Activated B cell treated with CpG ODN at 0.5 μM for 24 hours (primary cell): ENCODE measurements at regions of chr1 and their contacts with region 1.

Region 1: DNA sequence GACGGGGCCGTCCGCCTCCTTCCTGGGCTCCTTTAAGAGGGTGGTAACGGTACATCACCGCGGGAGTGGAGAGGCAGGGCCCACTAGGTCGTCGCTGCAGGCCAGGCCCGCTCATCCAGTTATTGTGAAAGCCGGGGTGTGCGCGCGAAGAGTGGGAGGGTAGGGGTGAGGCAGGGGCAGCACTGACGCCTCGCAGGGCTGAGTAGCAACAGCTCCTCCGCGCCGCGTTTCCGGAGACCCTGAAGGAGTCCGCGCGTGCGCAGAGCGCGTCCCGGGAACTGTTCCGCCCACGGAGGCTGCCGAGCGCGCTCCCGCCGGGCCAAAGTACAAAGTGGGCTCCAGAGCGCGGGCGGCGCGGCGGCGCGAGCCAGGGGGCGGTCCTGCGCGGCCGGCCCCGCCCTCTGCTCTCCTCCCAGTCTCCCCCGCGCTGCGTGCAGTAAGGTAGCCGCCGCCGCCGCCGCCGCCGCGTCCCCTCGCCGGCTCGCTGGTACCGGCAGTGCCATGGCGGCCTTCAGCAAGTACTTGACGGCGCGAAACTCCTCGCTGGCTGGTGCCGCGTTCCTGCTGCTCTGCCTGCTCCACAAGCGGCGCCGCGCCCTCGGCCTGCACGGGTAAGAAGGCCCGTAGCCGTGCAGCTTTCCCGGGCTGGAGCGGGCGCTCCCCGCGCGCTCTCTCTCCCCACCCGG is at the start of gene ABCD3:
- DNase-seq: peak; percentile 97
- ATAC-seq: peak; percentile 95
- H3K4me3 Mint-ChIP-seq: no peak within 1 kb of the TSS
- H3K27ac Mint-ChIP-seq: no peak within 1 kb of the TSS
- H3K4me1 Mint-ChIP-seq: peaks cover 17% of the 10 kb centered on the region
- H3K27me3 Mint-ChIP-seq: no peaks in the 10 kb centered on the region
- CTCF ChIP-seq: no peak
- total RNA-seq, gene ABCD3: 20.8 and 23.2 TPM in 2 replicates

Region 2: DNA sequence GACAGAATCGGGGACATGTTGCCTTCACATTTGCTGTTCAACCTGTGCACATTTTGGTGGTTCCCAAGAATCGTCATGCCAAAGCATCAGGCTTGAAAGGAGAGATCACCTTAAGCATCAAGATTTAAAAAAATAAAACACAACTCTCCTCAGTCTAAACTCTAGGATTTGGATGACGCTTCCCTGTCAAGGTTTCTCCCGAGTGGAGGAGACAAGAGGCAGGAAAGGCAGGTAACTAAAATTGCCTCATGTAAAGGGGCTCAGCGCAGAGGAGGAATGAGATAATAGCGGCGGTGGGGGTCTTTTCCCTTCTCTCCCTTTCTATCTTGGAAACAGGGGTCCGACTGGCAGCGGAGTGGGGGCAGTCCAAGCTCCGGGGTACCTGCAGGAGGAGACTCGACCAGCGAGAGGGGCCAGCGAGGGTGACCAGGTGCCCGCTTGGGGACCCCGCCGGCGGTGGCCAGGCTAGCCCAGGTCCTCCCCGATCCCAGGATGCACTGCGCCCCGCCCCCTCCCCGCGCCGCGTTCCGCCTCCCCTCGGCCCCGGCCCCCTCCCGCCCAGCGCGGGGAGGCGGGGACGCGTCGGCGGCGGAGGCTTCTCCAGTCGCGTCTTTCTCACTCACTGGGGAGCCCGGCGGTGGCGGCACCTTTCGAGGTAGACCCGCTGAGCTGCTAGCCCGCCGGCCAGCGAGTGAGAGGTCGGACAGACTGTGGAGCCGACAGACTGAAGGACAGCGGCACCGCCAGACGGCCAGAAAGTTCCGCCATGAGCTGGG is 970.4 kb before region 1 on chr1 and contains the start of gene FNBP1L:
- CTCF ChIA-PET with region 1: no interaction called
- POLR2A ChIA-PET with region 1: no interaction called
- intact Hi-C with region 1: loop called (anchors 5 kb)
- DNase-seq: peak; percentile 66
- ATAC-seq: peak; percentile 86
- H3K4me3 Mint-ChIP-seq: peak within 1 kb of the TSS; percentile 96
- H3K27ac Mint-ChIP-seq: no peak within 1 kb of the TSS
- H3K4me1 Mint-ChIP-seq: peaks cover 25% of the 10 kb centered on the region
- H3K27me3 Mint-ChIP-seq: peaks cover 23% of the 10 kb centered on the region
- CTCF ChIP-seq: no peak
- total RNA-seq, gene FNBP1L: 3.3 and 3.4 TPM in 2 replicates

Region 3: DNA sequence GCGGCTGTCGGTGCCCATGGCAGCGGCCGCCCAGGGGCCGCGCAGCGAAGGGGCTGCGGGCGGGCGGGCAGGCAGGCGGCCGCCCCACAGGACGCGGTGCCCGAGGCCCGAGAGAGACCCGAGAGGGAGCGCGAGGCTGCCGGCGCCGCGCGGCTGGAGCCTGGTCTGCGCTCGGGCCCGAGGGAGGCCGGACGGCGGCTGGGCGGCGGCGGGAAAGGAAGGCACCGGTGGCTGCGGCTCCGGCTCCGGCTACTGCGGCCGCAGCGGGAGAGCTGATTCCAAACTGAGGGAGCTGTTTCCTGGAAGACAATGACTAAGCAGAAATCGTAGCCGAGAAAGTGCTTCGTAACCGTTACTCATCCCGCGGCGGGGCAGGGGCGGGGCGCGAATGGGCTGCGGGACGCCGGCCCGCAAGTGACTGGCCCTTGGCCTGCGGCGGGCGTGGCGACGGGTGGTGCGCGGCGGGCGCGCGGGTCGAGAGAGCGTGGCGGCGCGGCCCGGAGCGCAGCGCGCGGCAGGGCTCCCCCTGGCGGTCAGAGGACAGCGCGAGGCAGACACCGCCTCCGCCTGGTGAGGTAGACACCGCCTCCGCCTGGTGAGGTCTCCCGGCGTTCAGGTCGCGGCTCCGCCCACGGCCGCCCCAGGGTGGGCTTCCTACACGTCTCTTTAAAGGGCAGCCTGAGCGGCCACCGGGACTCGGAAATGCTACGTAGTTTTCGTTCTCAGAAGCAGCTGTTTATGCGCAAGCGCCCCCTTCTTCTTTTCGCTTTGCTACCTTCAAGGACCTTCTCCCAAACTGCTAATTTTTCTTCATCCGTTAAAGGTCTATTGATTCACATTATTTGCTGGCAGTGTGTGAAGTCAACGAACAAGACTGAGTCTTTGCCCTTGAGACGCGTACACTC is 508.7 kb before region 1 on chr1 and contains the start of gene GCLM:
- CTCF ChIA-PET with region 1: no interaction called
- POLR2A ChIA-PET with region 1: no interaction called
- intact Hi-C with region 1: loop called (anchors 2 kb)
- DNase-seq: peak; percentile 95
- ATAC-seq: peak; percentile 92
- H3K4me3 Mint-ChIP-seq: peak within 1 kb of the TSS; percentile 89
- H3K27ac Mint-ChIP-seq: peak within 1 kb of the TSS; percentile 87
- H3K4me1 Mint-ChIP-seq: peaks cover 25% of the 10 kb centered on the region
- H3K27me3 Mint-ChIP-seq: no peaks in the 10 kb centered on the region
- CTCF ChIP-seq: peak; percentile 48
- total RNA-seq, gene GCLM: 8.6 and 9.6 TPM in 2 replicates

Region 4: GRCh38 chr1:94792473-94793295 is 374.6 kb after region 1 on chr1:
- CTCF ChIA-PET with region 1: no interaction called
- POLR2A ChIA-PET with region 1: no interaction called
- intact Hi-C with region 1: loop called (anchors 2 kb)
- DNase-seq: no peak
- ATAC-seq: peak; percentile 92
- H3K4me3 Mint-ChIP-seq: peak overlapping the region; percentile 58
- H3K27ac Mint-ChIP-seq: peak overlapping the region; percentile 46
- H3K4me1 Mint-ChIP-seq: peaks cover 49% of the 10 kb centered on the region
- H3K27me3 Mint-ChIP-seq: no peaks in the 10 kb centered on the region
- CTCF ChIP-seq: no peak

Region 5: GRCh38 chr1:94971491-94971924 is 553.4 kb after region 1 on chr1:
- CTCF ChIA-PET with region 1: no interaction called
- POLR2A ChIA-PET with region 1: no interaction called
- intact Hi-C with region 1: loop called (anchors 10 kb)
- DNase-seq: no peak
- ATAC-seq: no peak
- H3K4me3 Mint-ChIP-seq: no peak overlapping the region
- H3K27ac Mint-ChIP-seq: no peak overlapping the region
- H3K4me1 Mint-ChIP-seq: no peaks in the 10 kb centered on the region
- H3K27me3 Mint-ChIP-seq: no peaks in the 10 kb centered on the region
- CTCF ChIP-seq: no peak

Region 6: DNA sequence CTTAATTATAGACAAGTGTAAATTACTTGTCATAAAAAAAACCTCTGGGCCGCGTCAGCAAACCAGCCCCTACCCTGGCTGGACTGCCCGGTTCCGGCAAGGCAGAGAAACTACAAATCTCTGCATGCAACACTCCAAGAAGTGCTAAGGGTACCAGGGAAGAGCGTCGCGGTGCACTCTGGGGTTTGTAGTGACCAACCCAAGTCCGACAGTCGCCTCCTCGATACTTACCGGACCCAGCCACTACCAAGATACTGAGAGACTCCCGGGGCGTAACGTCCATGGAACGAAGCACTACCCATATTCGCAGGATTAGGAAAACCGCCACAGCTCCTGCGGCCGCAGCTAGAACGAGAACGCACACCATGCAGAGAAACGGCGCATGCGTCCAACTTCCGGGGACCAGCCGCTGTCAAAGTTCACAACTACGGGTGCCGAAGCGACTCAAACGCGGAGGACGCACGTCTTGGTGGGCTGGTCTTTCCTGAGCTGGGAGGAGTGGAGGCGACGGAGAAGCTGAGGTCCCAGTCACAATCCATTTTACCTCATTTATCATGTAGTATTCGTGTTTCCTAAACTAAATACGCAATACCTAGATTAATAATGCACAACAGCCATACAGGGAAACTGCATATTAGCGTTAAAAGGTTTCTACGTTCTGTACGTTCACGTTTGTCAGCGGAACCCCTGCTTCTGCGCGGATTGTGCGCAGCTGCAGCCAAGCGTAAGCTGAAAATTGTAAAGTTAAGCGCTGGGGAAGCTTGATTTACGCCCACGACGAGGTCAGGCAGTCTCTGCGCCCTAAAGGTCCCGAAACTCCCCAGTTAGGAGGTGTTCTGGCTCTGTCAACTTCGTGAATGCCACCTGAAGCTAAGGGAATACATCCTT is 654.7 kb after region 1 on chr1 and contains the start of gene ALG14:
- CTCF ChIA-PET with region 1: no interaction called
- POLR2A ChIA-PET with region 1: no interaction called
- intact Hi-C with region 1: loop called (anchors 1 kb)
- DNase-seq: peak; percentile 88
- ATAC-seq: peak; percentile 96
- H3K4me3 Mint-ChIP-seq: peak within 1 kb of the TSS; percentile 100
- H3K27ac Mint-ChIP-seq: peak within 1 kb of the TSS; percentile 99
- H3K4me1 Mint-ChIP-seq: peaks cover 20% of the 10 kb centered on the region
- H3K27me3 Mint-ChIP-seq: peaks cover 3% of the 10 kb centered on the region
- CTCF ChIP-seq: no peak
- total RNA-seq, gene ALG14: 3.7 and 7.5 TPM in 2 replicates